Calu3 (cell line): ENCODE measurements at regions of chr3 and their contacts with region 1.

Region 1: DNA sequence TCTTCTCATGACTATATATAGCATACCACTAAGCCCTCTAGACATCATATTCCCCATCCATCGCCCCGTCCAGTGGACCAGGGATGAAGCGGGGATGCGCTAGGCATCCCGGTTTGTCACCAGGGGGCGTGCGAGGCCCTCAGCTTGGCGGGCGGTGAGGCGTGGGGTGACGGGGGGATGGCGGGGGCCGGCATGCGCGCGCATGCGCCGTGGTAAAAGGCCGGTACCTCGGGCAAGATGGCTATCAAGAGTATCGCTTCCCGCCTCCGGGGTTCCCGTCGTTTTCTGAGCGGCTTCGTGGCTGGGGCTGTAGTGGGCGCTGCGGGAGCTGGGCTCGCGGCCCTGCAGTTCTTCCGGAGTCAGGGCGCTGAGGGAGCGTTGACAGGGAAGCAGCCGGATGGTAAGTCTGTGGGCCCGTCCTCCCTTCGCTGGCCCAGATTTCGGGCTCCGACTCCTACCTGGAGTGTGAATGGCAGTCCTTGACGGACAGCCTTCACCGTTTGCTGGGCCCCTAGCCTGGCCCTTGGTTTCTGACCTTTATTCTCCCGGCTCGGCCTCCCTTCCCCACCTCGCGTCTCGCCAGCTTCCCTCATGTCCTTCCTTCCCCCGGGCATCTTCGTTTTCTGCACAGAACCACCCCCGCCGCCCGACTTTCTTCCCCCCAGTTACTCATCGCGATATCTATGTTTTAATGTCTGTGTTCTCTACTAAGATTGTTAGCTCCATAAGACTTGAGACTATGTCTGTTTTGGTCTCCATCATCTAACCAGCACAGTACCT is at the start of gene EXOG:
- DNase-seq: peak; percentile 96
- H3K4me3 Mint-ChIP-seq: peak within 1 kb of the TSS; percentile 93
- H3K27ac Mint-ChIP-seq: peak within 1 kb of the TSS; percentile 56
- H3K4me1 Mint-ChIP-seq: no peaks in the 10 kb centered on the region
- H3K27me3 Mint-ChIP-seq: no peaks in the 10 kb centered on the region
- CTCF ChIP-seq: peak; percentile 85
- total RNA-seq, gene EXOG: 11.2 and 13.2 TPM in 2 replicates

Region 2: GRCh38 chr3:38515367-38515766 is 19.0 kb after region 1 on chr3:
- CTCF ChIA-PET with region 1: no interaction called
- intact Hi-C with region 1: no loop called
- DNase-seq: no peak
- H3K4me3 Mint-ChIP-seq: no peak overlapping the region
- H3K27ac Mint-ChIP-seq: no peak overlapping the region
- H3K4me1 Mint-ChIP-seq: no peaks in the 10 kb centered on the region
- H3K27me3 Mint-ChIP-seq: no peaks in the 10 kb centered on the region
- CTCF ChIP-seq: no peak

Region 3: DNA sequence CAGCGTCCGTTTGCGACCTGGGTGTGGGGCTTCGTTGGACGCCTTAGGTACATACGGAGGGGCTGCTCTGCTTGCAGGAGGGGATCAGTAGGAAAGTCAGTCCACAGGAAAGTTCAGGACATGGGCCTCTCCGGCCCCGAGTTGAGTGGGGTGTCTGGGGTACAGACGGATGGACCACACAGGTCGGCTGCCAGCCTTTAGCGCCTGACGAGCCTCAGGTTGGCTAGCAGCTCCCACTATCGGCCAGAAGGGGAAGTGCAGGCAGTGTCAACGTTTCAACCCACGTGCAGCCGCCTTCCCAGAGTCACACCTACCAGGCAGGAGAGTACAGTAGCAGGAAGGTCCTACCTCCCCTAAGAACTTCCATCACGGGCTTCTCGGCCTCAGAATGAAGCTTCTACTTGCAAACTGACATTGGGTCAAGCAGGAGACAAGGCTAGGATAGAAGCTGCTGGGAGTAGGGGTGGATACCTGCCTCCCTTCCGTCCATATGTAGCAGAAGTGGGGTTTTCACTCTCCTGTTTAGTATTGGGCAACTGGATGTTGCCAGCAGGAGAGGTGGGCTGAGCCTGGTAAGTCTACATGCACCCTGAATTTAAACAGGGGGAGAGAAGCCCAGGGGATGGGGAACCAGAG is 155.0 kb after region 1 on chr3:
- CTCF ChIA-PET with region 1: interaction called, 10 read pairs
- intact Hi-C with region 1: no loop called
- DNase-seq: peak; percentile 66
- H3K4me3 Mint-ChIP-seq: no peak overlapping the region
- H3K27ac Mint-ChIP-seq: no peak overlapping the region
- H3K4me1 Mint-ChIP-seq: no peaks in the 10 kb centered on the region
- H3K27me3 Mint-ChIP-seq: peaks cover 41% of the 10 kb centered on the region
- CTCF ChIP-seq: peak; percentile 84

Region 4: DNA sequence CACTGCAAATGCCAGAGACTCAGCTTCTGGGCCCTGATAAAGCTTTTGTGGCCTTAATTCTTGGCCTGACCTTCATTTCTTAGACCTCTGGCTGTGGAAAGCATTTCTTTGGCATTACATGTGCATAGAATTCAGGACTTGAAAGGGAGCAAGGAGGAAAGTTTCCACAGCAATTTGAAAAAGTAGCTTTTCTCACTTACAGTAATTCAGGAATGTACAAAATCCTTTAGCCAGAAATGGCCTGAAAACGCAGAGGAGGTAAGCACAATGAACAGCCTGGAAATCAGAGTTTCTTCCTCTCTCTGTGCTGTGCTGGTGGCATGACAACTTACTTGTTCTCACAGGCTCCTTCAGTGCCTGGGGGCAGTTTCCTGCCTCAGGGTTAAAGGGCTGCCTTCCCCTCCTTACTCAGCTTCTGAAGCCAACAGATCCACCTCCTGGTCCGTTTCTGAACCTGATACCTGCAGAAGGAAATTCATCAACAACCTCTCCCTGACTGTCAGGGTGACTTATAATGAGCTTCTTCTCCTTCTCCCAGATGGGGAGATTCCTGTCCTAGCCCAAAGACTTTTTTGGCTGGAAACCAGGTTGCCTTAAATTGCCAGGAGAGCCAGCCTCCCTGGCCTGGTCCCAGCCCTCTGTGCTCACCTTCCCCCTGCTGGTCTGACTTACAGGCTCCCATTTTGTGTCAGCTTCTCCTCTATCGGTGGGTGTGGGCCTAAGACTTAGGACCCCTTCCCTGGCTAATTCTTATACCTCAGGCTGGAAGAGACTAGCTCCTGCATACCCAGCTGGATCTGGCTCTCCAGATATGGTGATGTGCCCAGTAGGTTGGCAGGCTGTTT is 1415.4 kb after region 1 on chr3:
- CTCF ChIA-PET with region 1: no interaction called
- intact Hi-C with region 1: no loop called
- DNase-seq: peak; percentile 54
- H3K4me3 Mint-ChIP-seq: peak overlapping the region; percentile 16
- H3K27ac Mint-ChIP-seq: peak overlapping the region; percentile 71
- H3K4me1 Mint-ChIP-seq: peaks cover 48% of the 10 kb centered on the region
- H3K27me3 Mint-ChIP-seq: no peaks in the 10 kb centered on the region
- CTCF ChIP-seq: no peak